ENCODE measurements at regions of chr13 and their contacts with region 1.

Region 1: GRCh38 chr13:59771272-59771671 is 392.5 kb downstream of the DIAPH3 start:
- DNase-seq: peak; percentile 59
- ATAC-seq: 0 out of 2 replicates have a peak, but pooled peaks have one; percentile 30
- H3K4me3 ChIP-seq: no peak overlapping the region
- H3K27ac ChIP-seq: no peak overlapping the region
- H3K4me1 ChIP-seq: peaks cover 7% of the 10 kb centered on the region
- H3K27me3 ChIP-seq: no peaks in the 10 kb centered on the region
- CTCF ChIP-seq: peak; percentile 77
- POLR2A ChIP-seq: no peak
- RAD21 ChIP-seq: peak; percentile 76

Region 2: DNA sequence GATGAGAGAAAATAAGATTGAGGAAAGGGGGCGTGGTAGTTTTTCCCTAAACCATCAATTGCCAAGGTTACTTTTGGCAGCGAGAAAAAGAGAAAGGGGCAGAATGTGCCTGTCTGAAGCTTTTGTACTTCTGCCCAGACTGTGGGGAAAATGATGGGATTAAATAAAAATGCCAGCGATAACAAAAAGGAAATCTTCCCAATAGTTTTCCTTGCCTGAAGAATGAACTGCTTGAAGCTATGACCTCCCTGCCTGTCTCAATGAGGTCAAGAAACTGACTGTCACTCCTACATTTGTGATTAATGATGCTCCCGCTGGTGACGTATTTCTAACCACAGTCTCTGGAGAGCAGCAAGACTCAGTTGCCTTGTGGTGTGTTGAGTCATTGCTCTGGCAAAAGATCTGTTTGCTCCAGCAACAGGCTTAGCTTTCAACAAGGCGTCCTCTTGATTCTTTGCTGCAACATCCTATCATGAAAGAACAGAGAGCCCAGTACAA is 659.0 kb before region 1 on chr13:
- CTCF ChIA-PET with region 1: no interaction called
- POLR2A ChIA-PET with region 1: no interaction called
- dilution Hi-C with region 1: no loop called
- in situ Hi-C with region 1: loop called (anchors 25 kb)
- intact Hi-C with region 1: no loop called
- DNase-seq: peak; percentile 99
- ATAC-seq: peak; percentile 92
- H3K4me3 ChIP-seq: no peak overlapping the region
- H3K27ac ChIP-seq: peak overlapping the region; percentile 65; the same call in 1 of the 2 replicates
- H3K4me1 ChIP-seq: peaks cover 3% of the 10 kb centered on the region
- H3K27me3 ChIP-seq: no peaks in the 10 kb centered on the region
- CTCF ChIP-seq: no peak
- POLR2A ChIP-seq: no peak
- RAD21 ChIP-seq: no peak

Region 3: DNA sequence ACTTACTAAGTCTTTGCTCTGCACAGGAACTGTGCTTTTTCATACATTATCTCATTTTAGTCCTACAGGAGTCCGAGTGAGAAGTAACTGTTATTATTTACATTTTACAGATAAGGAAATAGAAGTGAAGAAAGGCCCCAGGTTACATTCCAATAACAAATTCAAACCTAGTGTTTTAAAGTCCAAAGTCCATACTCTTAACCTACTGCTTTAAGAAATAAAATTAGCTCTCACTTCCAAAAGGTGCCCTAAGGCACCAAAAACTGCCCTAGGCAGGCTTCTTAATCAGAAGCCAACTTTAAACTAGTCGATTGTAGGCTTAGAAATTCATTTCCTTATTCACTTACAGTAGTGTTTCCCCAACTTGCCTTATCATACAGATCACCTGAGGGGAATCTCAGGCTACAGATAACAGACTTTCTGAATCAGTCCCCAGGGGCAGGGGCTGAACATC is 163.5 kb before region 1 on chr13:
- CTCF ChIA-PET with region 1: no interaction called
- POLR2A ChIA-PET with region 1: no interaction called
- dilution Hi-C with region 1: no loop called
- in situ Hi-C with region 1: no loop called
- intact Hi-C with region 1: no loop called
- DNase-seq: no peak
- ATAC-seq: no peak
- H3K4me3 ChIP-seq: no peak overlapping the region
- H3K27ac ChIP-seq: no peak overlapping the region
- H3K4me1 ChIP-seq: no peaks in the 10 kb centered on the region
- H3K27me3 ChIP-seq: peaks cover 2% of the 10 kb centered on the region
- CTCF ChIP-seq: no peak
- POLR2A ChIP-seq: no peak
- RAD21 ChIP-seq: no peak

Region 4: DNA sequence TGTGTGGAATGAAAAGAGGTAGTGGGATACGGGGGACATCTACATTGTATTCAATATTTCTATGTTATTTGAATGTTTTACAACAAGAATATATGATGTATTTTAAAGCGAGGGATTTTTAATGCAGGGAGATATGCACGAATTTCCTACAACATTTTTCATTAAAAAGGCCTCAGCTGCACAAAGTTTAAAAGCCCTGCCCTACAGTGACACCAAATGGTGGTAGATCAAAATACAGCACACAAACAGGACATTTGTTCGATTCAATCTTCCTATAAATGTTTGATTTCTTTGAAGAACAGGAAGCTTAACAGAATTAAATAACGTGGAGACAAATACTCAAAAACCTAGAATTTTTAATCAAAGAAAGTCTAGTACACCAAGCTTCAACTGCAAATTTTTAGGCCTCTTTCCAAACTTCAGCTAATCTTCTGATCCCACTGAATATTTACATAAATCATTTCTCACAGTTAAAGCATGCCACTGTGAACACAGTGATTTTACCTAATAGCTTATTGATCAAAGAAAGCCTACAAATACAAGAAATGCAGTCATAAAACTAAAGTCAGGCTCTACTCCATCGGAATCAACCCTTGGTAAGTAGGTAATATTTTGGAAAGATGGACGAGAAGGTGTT is 135.3 kb after region 1 on chr13:
- CTCF ChIA-PET with region 1: interaction called, 4 read pairs
- POLR2A ChIA-PET with region 1: interaction called, 3 read pairs
- dilution Hi-C with region 1: no loop called
- in situ Hi-C with region 1: no loop called
- intact Hi-C with region 1: loop called (anchors 2 kb)
- DNase-seq: peak; percentile 58
- ATAC-seq: peak; percentile 82
- H3K4me3 ChIP-seq: no peak overlapping the region
- H3K27ac ChIP-seq: no peak overlapping the region
- H3K4me1 ChIP-seq: no peaks in the 10 kb centered on the region
- H3K27me3 ChIP-seq: no peaks in the 10 kb centered on the region
- CTCF ChIP-seq: peak; percentile 80
- POLR2A ChIP-seq: no peak
- RAD21 ChIP-seq: peak; percentile 85

Region 5: DNA sequence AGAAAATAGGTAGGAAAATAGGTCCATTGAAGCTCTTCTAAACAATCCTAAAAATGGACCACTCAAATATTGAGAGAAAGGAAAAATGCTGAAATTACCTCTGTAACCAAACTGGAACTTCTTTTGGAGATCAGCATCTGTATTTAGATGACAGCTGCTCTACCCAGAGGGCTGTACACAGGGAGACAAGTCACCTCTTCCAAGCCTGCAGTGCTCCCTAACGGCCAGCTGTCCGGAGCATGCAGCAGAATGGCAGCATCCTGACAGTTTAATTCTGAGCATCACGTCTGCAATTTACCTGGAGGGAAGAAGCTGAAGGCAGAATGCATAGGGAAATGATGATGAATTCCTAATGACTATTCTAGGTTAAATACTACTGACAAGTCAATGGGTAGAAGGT is 455.2 kb after region 1 on chr13:
- CTCF ChIA-PET with region 1: no interaction called
- POLR2A ChIA-PET with region 1: no interaction called
- dilution Hi-C with region 1: no loop called
- in situ Hi-C with region 1: no loop called
- intact Hi-C with region 1: loop called (anchors 5 kb)
- DNase-seq: peak; percentile 47
- ATAC-seq: peak; percentile 72
- H3K4me3 ChIP-seq: no peak overlapping the region
- H3K27ac ChIP-seq: no peak overlapping the region
- H3K4me1 ChIP-seq: no peaks in the 10 kb centered on the region
- H3K27me3 ChIP-seq: peaks cover 8% of the 10 kb centered on the region
- CTCF ChIP-seq: peak; percentile 57
- POLR2A ChIP-seq: no peak
- RAD21 ChIP-seq: peak; percentile 68

Region 6: DNA sequence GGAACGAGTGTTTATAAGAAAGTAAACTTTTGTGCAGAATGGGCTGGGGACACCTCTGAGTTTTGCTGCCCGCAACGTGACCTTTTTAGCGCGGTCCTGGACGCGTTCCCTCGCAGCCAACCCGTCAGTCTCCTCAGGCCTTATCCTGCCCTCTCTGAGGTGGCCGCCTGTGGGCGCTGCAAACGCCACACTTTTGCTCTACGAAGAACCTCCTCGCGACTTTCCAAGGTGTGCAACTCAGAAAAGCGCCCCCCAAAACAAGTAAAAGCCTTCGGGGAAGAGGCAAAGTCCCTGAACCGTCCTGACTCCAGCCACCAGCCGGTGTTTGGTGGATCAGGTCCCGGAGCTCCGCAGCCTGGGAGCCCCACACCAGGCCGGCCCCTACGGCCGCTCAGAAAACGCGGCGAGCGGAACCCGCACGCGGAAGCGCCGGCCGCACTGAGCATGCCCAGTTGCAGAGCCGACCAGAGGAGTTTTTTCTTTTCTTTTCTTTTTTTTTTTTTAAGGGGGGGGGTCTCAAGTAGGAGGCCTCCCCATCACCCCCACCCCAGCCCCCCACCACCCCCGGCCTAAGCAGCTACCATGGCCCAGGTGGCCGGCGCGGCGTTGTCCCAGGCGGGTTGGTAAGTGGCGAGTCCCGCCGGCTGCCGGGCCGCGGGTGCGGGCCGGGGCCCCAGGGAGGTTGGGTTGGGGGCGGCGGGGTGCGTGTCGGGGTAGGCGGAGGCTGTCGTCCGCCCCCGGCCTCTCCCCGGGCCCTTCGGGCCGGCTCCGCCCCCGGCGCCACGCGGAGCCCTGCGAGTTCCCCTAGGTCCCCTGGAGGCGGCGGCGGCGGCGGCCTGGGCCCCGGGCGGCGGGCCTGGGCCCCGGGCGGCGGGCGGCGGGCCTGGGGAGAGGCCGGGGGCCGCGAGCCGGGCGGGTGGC is 625.8 kb after region 1 on chr13 and contains the start of gene TDRD3:
- CTCF ChIA-PET with region 1: no interaction called
- POLR2A ChIA-PET with region 1: no interaction called
- dilution Hi-C with region 1: no loop called
- in situ Hi-C with region 1: no loop called
- intact Hi-C with region 1: loop called (anchors 2 kb)
- DNase-seq: peak; percentile 82
- ATAC-seq: peak; percentile 65
- H3K4me3 ChIP-seq: peak within 1 kb of the TSS; percentile 81
- H3K27ac ChIP-seq: peak within 1 kb of the TSS; percentile 99
- H3K4me1 ChIP-seq: peaks cover 5% of the 10 kb centered on the region; the same call in 1 of the 2 replicates
- H3K27me3 ChIP-seq: no peaks in the 10 kb centered on the region
- CTCF ChIP-seq: peak; percentile 70
- POLR2A ChIP-seq: no peak
- RAD21 ChIP-seq: 0 out of 2 replicates have a peak, but pooled peaks have one; percentile 7
- total RNA-seq, gene TDRD3: 12.0 and 14.7 TPM in 2 replicates